ENCODE measurements at regions of chr12 and their contacts with region 1.

Region 1: GRCh38 chr12:85468356-85469157 is 188.5 kb downstream of the ALX1 start:
- DNase-seq: peak in 1 of 3 donors; percentile 74
- ATAC-seq: peak; percentile 91
- H3K4me3 ChIP-seq: no peak overlapping the region
- H3K4me1 ChIP-seq: no peaks in the 10 kb centered on the region
- CTCF ChIP-seq: no peak

Region 2: GRCh38 chr12:85866986-85867776 is 398.6 kb after region 1 on chr12:
- intact Hi-C with region 1: loop called (anchors 5 to 10 kb)
- DNase-seq: peak in 1 of 3 donors; percentile 65
- ATAC-seq: peak; percentile 60
- H3K4me3 ChIP-seq: no peak overlapping the region
- H3K4me1 ChIP-seq: no peaks in the 10 kb centered on the region
- CTCF ChIP-seq: peak; percentile 26

Region 3: GRCh38 chr12:85872497-85873091 is 404.0 kb after region 1 on chr12:
- intact Hi-C with region 1: loop called (anchors 5 to 10 kb)
- DNase-seq: peak in 1 of 3 donors; percentile 11
- ATAC-seq: peak; percentile 45
- H3K4me3 ChIP-seq: no peak overlapping the region
- H3K4me1 ChIP-seq: no peaks in the 10 kb centered on the region
- CTCF ChIP-seq: no peak

Region 4: DNA sequence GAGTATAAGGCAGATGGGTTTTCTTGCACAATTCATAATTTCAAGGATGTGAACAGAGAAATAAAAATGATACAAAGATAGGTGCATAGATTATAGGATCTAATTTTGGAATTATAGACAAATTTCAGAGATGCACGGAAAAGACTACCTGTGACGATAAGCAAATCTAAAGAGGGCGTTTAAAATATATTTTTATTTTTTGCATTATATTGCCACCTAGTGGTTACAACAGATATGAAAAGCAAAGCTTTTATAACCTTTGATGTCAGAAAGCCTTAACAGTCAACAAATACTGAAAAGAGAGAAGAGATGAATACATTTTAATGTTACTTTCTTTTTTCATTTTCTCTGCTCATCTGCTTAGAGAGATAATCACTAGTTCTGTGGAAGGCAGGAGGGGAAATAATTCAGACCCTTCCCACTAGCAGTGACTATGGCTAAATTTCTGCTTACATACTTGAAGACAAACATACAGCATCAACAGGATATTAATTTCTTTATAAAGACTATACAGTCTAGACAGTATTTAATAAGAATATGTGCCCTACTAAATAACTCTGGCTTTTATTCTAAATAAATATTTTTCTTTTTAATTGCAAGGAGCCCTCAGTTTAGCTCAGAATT is 451.9 kb after region 1 on chr12:
- intact Hi-C with region 1: loop called in 1 of 2 experiments (anchors 5 kb)
- DNase-seq: no peak
- ATAC-seq: peak; percentile 32
- H3K4me3 ChIP-seq: no peak overlapping the region
- H3K4me1 ChIP-seq: no peaks in the 10 kb centered on the region
- CTCF ChIP-seq: no peak